Esophagus muscularis mucosa (tissue), 4 donors: ENCODE measurements at regions of chr12 and their contacts with region 1.

Region 1: DNA sequence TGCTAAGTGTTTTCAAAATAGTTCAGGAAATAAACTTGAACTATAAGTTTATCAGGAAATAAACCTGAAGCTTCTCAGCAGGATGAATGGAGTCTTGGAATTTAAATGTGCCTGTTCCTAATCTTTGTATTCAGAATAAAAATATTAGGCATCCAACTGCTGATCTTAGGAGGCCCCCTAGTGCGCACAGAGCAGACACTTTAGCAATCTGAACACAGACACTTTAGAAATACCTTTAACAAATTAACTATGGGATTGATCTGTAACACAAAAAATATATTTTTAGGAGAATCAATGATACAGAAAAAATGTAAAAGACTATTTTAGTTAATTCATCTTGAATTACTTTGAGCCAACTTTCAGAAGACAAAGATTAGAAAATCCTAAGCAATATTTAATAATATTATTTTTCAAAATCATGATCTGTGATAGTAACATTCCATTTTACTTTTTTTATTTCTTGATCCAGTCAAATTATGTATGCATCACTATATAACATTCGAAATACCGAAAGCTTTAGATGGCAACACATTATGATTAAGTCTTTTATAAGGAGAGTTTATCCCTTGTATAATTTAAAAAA is 80.9 kb downstream of the SLC41A2 start:
- DNase-seq: no peak
- H3K4me3 ChIP-seq: no peak overlapping the region
- H3K27ac ChIP-seq: no peak overlapping the region
- H3K4me1 ChIP-seq: no peaks in the 10 kb centered on the region
- H3K27me3 ChIP-seq: no peaks in the 10 kb centered on the region
- CTCF ChIP-seq: peak; percentile 52 to 68 (median 63)
- EP300 ChIP-seq: no peak
- POLR2A ChIP-seq: no peak

Region 2: GRCh38 chr12:104381731-104382480 is 495.3 kb before region 1 on chr12:
- intact Hi-C with region 1: loop called (anchors 2 kb)
- DNase-seq: peak; percentile 94
- H3K4me3 ChIP-seq: no peak overlapping the region
- H3K27ac ChIP-seq: no peak overlapping the region
- H3K4me1 ChIP-seq: peaks cover 7 to 10% (median 8%) of the 10 kb centered on the region in 4 donors
- H3K27me3 ChIP-seq: no peaks in the 10 kb centered on the region
- CTCF ChIP-seq: peak; percentile 87 to 98 (median 93)
- EP300 ChIP-seq: no peak
- POLR2A ChIP-seq: no peak